Ovary (tissue), 10 donors: ENCODE measurements at regions of chr19 and their contacts with region 1.

Region 1: DNA sequence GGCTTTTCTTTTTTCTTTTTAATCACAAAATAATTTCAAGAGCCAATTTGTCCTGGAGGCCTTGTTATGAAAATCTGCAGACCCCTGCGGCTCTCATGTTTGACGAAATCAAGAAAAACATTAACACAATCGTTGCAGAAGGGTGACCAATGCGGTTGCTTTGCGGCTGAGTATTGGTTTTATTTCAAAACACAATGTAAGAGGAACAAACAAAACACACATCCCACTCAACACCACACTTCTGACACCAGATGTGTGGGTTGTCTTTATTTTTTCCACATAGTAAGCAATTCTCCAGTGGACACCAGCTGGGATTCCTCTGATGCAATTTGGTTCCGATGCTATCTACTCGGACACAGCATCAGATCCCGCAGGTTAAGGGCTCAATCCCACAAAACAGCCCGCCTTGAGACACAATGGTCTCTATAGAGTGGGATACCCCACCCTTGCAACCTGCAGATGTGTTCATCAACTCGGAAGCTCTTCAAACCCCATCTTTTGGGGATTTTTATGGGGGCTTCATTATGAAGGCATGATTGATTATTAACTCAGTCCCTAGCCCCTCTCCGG is 21.9 kb upstream of the CCDC124 start:
- DNase-seq: no peak
- H3K4me3 ChIP-seq: no peak overlapping the region
- H3K27ac ChIP-seq: no peak overlapping the region
- H3K4me1 ChIP-seq: no peaks in the 10 kb centered on the region
- H3K27me3 ChIP-seq: no peaks in the 10 kb centered on the region
- CTCF ChIP-seq: no peak
- EP300 ChIP-seq: no peak
- POLR2A ChIP-seq: no peak

Region 2: DNA sequence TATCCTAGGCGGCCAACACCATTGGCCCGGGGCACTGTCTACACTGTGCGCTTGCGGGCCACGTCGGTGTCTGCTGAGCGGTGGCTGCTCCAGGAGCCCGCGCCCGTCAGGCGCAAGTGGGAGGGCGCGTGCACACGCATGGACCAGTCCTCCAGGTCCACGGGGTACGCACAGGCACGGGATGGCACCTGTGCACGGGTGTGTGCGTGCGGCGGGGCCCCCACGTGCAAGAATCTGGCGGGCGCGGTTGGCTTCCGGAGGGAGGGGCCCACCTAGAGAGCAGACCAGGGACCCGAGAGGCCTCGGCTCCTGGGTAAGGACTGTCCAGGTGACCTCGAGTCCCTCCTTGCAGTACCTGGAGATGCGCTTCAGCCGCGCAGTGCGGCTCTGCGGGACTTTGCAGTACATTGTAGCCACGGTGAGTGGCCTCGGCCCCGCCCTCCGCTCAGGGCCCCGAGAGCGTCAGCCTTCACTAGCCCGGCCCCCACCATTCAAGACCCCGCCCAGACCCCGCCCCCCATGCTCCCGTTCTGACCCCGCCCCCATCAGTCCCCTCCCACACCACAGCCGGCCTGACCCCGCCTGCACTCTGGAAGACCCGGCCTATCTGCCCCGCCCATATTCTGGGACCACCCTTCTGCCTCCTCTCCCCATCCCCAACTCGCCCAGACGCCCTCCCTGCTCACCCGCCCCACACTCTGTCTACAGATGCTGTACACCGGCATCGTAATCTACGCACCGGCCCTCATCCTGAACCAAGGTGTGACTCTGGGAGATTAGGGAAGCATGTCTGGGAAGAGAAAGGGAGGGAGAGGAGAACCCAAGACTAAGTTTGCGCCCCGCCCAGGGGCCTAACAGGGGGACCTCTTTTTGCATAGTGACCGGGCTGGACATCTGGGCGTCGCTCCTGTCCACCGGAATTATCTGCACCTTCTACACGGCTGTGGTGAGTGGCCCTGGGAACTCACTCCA is 36.8 kb before region 1 on chr19:
- intact Hi-C with region 1: loop called in 1 of 4 experiments (anchors 5 kb)
- DNase-seq: no peak
- H3K4me3 ChIP-seq: no peak overlapping the region
- H3K27ac ChIP-seq: no peak overlapping the region
- H3K4me1 ChIP-seq: peaks cover 4% of the 10 kb centered on the region
- H3K27me3 ChIP-seq: peaks cover 6% of the 10 kb centered on the region
- CTCF ChIP-seq: no peak
- EP300 ChIP-seq: no peak
- POLR2A ChIP-seq: no peak

Region 3: GRCh38 chr19:18023622-18024251 is 112.9 kb after region 1 on chr19:
- intact Hi-C with region 1: no loop called
- DNase-seq: peak in 2 of 5 donors; percentile 54 to 55
- H3K4me3 ChIP-seq: no peak overlapping the region
- H3K27ac ChIP-seq: no peak overlapping the region
- H3K4me1 ChIP-seq: peaks cover 8% of the 10 kb centered on the region
- H3K27me3 ChIP-seq: no peaks in the 10 kb centered on the region
- CTCF ChIP-seq: no peak
- EP300 ChIP-seq: peak; percentile 56
- POLR2A ChIP-seq: no peak